Activated CD8-positive, alpha-beta T cell treated with anti-CD3 and anti-CD28 coated beads for 36 hours (primary cell): ENCODE measurements at regions of chr7 and their contacts with region 1.

Region 1: GRCh38 chr7:128387216-128388144 is 22.3 kb downstream of the IMPDH1 start:
- DNase-seq: peak; percentile 85
- ATAC-seq: peak; percentile 95
- H3K4me3 Mint-ChIP-seq: no peak overlapping the region
- H3K27ac Mint-ChIP-seq: no peak overlapping the region
- H3K4me1 Mint-ChIP-seq: no peaks in the 10 kb centered on the region
- H3K27me3 Mint-ChIP-seq: no peaks in the 10 kb centered on the region
- CTCF ChIP-seq: peak; percentile 88

Region 2: GRCh38 chr7:128121711-128122530 is 265.6 kb before region 1 on chr7:
- CTCF ChIA-PET with region 1: no interaction called
- POLR2A ChIA-PET with region 1: no interaction called
- intact Hi-C with region 1: no loop called
- DNase-seq: no peak
- ATAC-seq: no peak
- H3K4me3 Mint-ChIP-seq: no peak overlapping the region
- H3K27ac Mint-ChIP-seq: no peak overlapping the region
- H3K4me1 Mint-ChIP-seq: peaks cover 6% of the 10 kb centered on the region
- H3K27me3 Mint-ChIP-seq: no peaks in the 10 kb centered on the region
- CTCF ChIP-seq: no peak

Region 3: GRCh38 chr7:128197589-128197988 is 189.9 kb before region 1 on chr7:
- CTCF ChIA-PET with region 1: no interaction called
- POLR2A ChIA-PET with region 1: no interaction called
- intact Hi-C with region 1: no loop called
- DNase-seq: no peak
- ATAC-seq: no peak
- H3K4me3 Mint-ChIP-seq: no peak overlapping the region
- H3K27ac Mint-ChIP-seq: no peak overlapping the region
- H3K4me1 Mint-ChIP-seq: peaks cover 9% of the 10 kb centered on the region
- H3K27me3 Mint-ChIP-seq: peaks cover 23% of the 10 kb centered on the region
- CTCF ChIP-seq: no peak

Region 4: GRCh38 chr7:128343554-128344430 is 43.7 kb before region 1 on chr7 and contains the start of gene RBM28:
- CTCF ChIA-PET with region 1: interaction called, 264 read pairs
- POLR2A ChIA-PET with region 1: interaction called, 4 read pairs
- intact Hi-C with region 1: loop called (anchors 2 kb)
- DNase-seq: peak; percentile 90
- ATAC-seq: peak; percentile 97
- H3K4me3 Mint-ChIP-seq: peak within 1 kb of the TSS; percentile 85
- H3K27ac Mint-ChIP-seq: peak within 1 kb of the TSS; percentile 93
- H3K4me1 Mint-ChIP-seq: peaks cover 26% of the 10 kb centered on the region
- H3K27me3 Mint-ChIP-seq: peaks cover 3% of the 10 kb centered on the region
- CTCF ChIP-seq: no peak
- total RNA-seq, gene RBM28: 55.3 to 55.6 TPM

Region 5: GRCh38 chr7:128361411-128362379 is 25.8 kb before region 1 on chr7 and contains the start of gene PRRT4:
- CTCF ChIA-PET with region 1: interaction called, 52 read pairs
- POLR2A ChIA-PET with region 1: no interaction called
- intact Hi-C with region 1: no loop called
- DNase-seq: peak; percentile 45
- ATAC-seq: peak; percentile 63
- H3K4me3 Mint-ChIP-seq: peak within 1 kb of the TSS; percentile 64
- H3K27ac Mint-ChIP-seq: peak within 1 kb of the TSS; percentile 15
- H3K4me1 Mint-ChIP-seq: peaks cover 19% of the 10 kb centered on the region
- H3K27me3 Mint-ChIP-seq: peaks cover 51% of the 10 kb centered on the region
- CTCF ChIP-seq: no peak
- total RNA-seq, gene PRRT4: 0.20 to 0.69 TPM

Region 6: DNA sequence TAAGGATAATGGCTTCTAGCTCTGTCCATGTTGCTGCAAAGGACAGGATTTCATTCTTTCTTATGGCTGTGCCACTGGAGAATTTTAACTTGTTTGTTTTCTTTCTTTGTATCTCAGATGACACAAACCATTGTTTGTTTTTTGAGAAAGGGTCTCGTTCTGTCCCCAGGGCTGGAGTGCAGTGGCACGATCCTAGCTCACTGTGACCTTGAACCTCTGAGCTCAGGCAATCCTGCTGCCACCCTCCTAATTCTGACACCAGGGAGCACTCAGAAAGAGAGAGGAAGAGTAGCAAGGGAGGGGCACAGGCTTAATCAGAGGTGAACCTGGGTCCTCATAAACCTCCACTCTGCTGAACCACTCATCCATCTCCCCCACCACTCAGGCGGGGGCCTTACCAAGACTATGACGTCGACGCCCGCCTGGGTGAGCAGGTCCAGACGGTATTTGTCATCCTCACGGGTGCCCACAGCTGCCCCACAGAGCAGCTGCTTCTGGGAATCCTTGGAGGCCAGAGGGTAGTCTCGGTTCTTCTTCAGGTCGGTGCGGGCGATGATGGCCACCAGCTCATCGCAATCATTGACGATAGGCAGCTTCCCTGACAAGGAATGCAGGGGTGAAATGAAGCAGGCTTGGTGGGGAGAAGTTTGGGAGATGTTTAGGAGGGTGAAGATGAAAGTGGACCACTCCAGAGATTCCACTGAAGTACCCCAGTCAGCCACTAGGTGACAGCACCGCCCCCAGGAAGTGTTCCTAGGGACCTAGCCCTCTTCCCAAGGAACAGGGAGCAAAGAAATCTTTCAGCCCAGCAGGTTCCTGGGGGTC is 10.7 kb after region 1 on chr7:
- CTCF ChIA-PET with region 1: interaction called, 25 read pairs
- POLR2A ChIA-PET with region 1: no interaction called
- intact Hi-C with region 1: no loop called
- DNase-seq: peak; percentile 58
- ATAC-seq: peak; percentile 72
- H3K4me3 Mint-ChIP-seq: no peak overlapping the region
- H3K27ac Mint-ChIP-seq: no peak overlapping the region
- H3K4me1 Mint-ChIP-seq: no peaks in the 10 kb centered on the region
- H3K27me3 Mint-ChIP-seq: no peaks in the 10 kb centered on the region
- CTCF ChIP-seq: peak; percentile 96

Region 7: GRCh38 chr7:128415217-128415785 is 27.8 kb after region 1 on chr7:
- CTCF ChIA-PET with region 1: interaction called, 16 read pairs
- POLR2A ChIA-PET with region 1: interaction called, 3 read pairs
- intact Hi-C with region 1: no loop called
- DNase-seq: no peak
- ATAC-seq: no peak
- H3K4me3 Mint-ChIP-seq: no peak overlapping the region
- H3K27ac Mint-ChIP-seq: no peak overlapping the region
- H3K4me1 Mint-ChIP-seq: peaks cover 2% of the 10 kb centered on the region
- H3K27me3 Mint-ChIP-seq: peaks cover 10% of the 10 kb centered on the region
- CTCF ChIP-seq: no peak